ENCODE measurements at regions of chr1 and their contacts with region 1.

Region 1: GRCh38 chr1:75203415-75204277 is 69.5 kb downstream of the LHX8 start:
- DNase-seq: peak in 2 of 7 donors; percentile 8 to 31
- H3K4me3 ChIP-seq: no peak overlapping the region
- H3K27ac ChIP-seq: no peak overlapping the region
- H3K4me1 ChIP-seq: no peaks in the 10 kb centered on the region
- H3K27me3 ChIP-seq: no peaks in the 10 kb centered on the region
- CTCF ChIP-seq: peak; percentile 55 to 94 (median 76)
- POLR2A ChIP-seq: no peak

Region 2: GRCh38 chr1:74771913-74772515 is 431.6 kb before region 1 on chr1:
- intact Hi-C with region 1: loop called (anchors 5 to 10 kb)
- DNase-seq: peak in 4 of 7 donors; percentile 12 to 37 (median 28)
- H3K4me3 ChIP-seq: no peak overlapping the region
- H3K27ac ChIP-seq: no peak overlapping the region
- H3K4me1 ChIP-seq: peaks cover 0 to 11% of the 10 kb centered on the region in 2 donors
- H3K27me3 ChIP-seq: peaks cover 8% of the 10 kb centered on the region
- CTCF ChIP-seq: peak; percentile 61 to 84 (median 68)
- POLR2A ChIP-seq: no peak

Region 3: GRCh38 chr1:75014250-75014649 is 189.4 kb before region 1 on chr1:
- intact Hi-C with region 1: no loop called
- DNase-seq: no peak
- H3K4me3 ChIP-seq: no peak overlapping the region
- H3K27ac ChIP-seq: no peak overlapping the region
- H3K4me1 ChIP-seq: no peaks in the 10 kb centered on the region
- H3K27me3 ChIP-seq: no peaks in the 10 kb centered on the region
- CTCF ChIP-seq: no peak
- POLR2A ChIP-seq: no peak

Region 4: GRCh38 chr1:75115654-75116053 is 88.0 kb before region 1 on chr1:
- intact Hi-C with region 1: no loop called
- DNase-seq: no peak
- H3K4me3 ChIP-seq: no peak overlapping the region
- H3K27ac ChIP-seq: no peak overlapping the region
- H3K4me1 ChIP-seq: no peaks in the 10 kb centered on the region
- H3K27me3 ChIP-seq: no peaks in the 10 kb centered on the region
- CTCF ChIP-seq: no peak
- POLR2A ChIP-seq: no peak